ENCODE measurements at regions of chr7 and their contacts with region 1.

Region 1: DNA sequence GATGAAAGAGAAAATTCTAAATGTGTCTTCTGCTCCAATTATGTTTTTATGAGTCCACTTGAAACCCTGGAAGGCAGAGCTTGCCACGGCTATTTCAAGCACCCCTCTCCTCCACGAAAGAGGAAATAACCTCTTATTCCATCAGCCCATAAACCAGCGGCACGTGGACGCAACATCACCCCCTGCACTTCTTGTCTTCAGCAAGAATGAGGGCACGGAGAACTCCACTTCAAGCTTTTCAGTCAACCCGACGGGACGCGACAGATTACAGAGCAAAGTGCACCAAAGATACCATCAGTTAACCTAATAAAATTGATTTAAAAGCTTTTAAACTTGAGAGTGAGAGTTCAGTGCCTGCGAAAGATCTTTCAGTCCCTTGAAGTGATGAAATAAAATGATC is 406.3 kb downstream of the GALNT17 start:
- DNase-seq: no peak
- ATAC-seq: no peak
- H3K4me3 Mint-ChIP-seq: no peak overlapping the region
- H3K27ac Mint-ChIP-seq: no peak overlapping the region
- H3K4me1 Mint-ChIP-seq: no peaks in the 10 kb centered on the region
- H3K27me3 Mint-ChIP-seq: no peaks in the 10 kb centered on the region

Region 2: GRCh38 chr7:71486856-71487628 is 51.2 kb before region 1 on chr7:
- CTCF ChIA-PET with region 1: no interaction called
- POLR2A ChIA-PET with region 1: no interaction called
- intact Hi-C with region 1: no loop called
- DNase-seq: no peak
- ATAC-seq: no peak
- H3K4me3 Mint-ChIP-seq: no peak overlapping the region
- H3K27ac Mint-ChIP-seq: no peak overlapping the region
- H3K4me1 Mint-ChIP-seq: no peaks in the 10 kb centered on the region
- H3K27me3 Mint-ChIP-seq: no peaks in the 10 kb centered on the region

Region 3: DNA sequence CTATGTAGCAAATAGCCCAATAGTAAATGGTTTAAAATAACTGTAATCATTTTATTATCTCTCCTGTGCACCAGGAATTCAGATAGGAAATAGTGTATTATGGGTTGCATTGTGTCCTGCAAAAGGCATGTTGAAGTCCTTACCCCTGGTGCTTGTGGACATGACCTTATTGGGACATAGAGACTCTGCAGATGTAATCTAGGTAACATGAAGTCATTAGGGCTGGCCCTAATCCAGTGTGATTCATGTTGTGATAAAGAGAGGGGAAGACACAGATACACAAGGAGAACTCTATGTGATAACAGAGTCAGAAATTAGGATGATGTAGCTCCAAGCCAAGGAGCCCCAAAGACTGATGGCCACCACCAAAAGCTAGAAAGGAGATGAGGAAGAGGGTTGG is 56.5 kb after region 1 on chr7:
- CTCF ChIA-PET with region 1: no interaction called
- POLR2A ChIA-PET with region 1: no interaction called
- intact Hi-C with region 1: loop called in 1 of 2 experiments (anchors 10 kb)
- DNase-seq: no peak
- ATAC-seq: no peak
- H3K4me3 Mint-ChIP-seq: no peak overlapping the region
- H3K27ac Mint-ChIP-seq: no peak overlapping the region
- H3K4me1 Mint-ChIP-seq: no peaks in the 10 kb centered on the region
- H3K27me3 Mint-ChIP-seq: no peaks in the 10 kb centered on the region